ENCODE measurements at regions of chr12 and their contacts with region 1.

Region 1: GRCh38 chr12:62414180-62414579 is 52.4 kb upstream of the MON2 start:
- DNase-seq: no peak
- ATAC-seq: no peak
- H3K4me3 ChIP-seq: no peak overlapping the region
- H3K27ac ChIP-seq: no peak overlapping the region
- H3K4me1 ChIP-seq: no peaks in the 10 kb centered on the region
- H3K27me3 ChIP-seq: no peaks in the 10 kb centered on the region
- CTCF ChIP-seq: no peak

Region 2: DNA sequence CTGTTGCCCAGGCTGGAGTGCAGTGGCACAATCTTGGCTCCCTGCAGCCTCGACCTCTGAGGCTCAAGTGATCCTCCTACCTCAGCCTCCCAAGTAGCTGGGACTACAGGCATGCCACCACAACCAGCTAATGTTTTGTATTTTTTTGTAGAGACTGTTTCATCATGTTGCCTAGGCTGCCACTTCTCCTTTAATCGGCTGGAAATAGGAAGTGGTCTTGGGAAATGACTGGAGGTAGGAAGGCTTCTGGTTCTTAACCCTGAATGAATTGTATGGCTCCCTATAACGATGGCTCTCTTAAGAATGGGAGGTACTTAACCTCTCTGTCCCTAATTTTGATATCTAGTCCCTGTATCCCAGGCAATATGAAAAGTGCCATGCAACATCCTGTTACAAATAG is 267.9 kb before region 1 on chr12:
- CTCF ChIA-PET with region 1: interaction called, 14 read pairs
- POLR2A ChIA-PET with region 1: no interaction called
- in situ Hi-C with region 1: no loop called
- intact Hi-C with region 1: no loop called
- DNase-seq: no peak
- ATAC-seq: no peak
- H3K4me3 ChIP-seq: no peak overlapping the region
- H3K27ac ChIP-seq: no peak overlapping the region
- H3K4me1 ChIP-seq: no peaks in the 10 kb centered on the region
- H3K27me3 ChIP-seq: no peaks in the 10 kb centered on the region
- CTCF ChIP-seq: no peak

Measured in Panc1 (cell line).